ENCODE measurements at regions of chr1 and their contacts with region 1.

Region 1: GRCh38 chr1:240484804-240485453 is 127.0 kb downstream of the GREM2 start:
- DNase-seq: no peak
- ATAC-seq: no peak

Region 2: GRCh38 chr1:240719953-240720700 is 235.2 kb after region 1 on chr1:
- intact Hi-C with region 1: loop called (anchors 2 kb)
- DNase-seq: no peak
- ATAC-seq: peak; percentile 73

Measured in sciatic nerve (tissue), 2 donors.